WTC11 (cell line): ENCODE measurements at regions of chr6 and their contacts with region 1.

Region 1: DNA sequence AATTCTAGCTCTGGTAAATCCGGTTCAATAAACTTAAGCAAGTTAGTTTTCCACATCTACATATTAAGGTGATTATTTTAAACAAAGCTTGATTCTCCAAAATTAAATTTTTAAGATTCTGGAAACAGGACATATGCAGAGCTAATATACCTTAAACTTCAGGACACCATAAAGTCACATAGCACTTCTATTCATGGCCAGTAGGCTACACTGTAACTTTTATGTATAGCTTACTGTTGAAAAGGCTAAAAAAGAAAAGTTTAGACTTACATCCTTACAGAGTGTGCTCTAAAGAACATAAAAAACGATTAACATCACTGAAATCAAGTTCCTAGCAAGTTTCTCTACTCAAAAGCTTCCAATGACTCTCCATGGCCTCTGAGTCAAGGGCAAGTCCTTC is 224.7 kb downstream of the PTPRK start:
- DNase-seq: no peak
- ATAC-seq: peak; percentile 65
- H3K4me3 Mint-ChIP-seq: no peak overlapping the region
- H3K27ac Mint-ChIP-seq: no peak overlapping the region
- H3K4me1 Mint-ChIP-seq: peaks cover 5% of the 10 kb centered on the region; the same call in 1 of the 2 replicates
- H3K27me3 Mint-ChIP-seq: no peaks in the 10 kb centered on the region
- CTCF ChIP-seq: no peak

Region 2: DNA sequence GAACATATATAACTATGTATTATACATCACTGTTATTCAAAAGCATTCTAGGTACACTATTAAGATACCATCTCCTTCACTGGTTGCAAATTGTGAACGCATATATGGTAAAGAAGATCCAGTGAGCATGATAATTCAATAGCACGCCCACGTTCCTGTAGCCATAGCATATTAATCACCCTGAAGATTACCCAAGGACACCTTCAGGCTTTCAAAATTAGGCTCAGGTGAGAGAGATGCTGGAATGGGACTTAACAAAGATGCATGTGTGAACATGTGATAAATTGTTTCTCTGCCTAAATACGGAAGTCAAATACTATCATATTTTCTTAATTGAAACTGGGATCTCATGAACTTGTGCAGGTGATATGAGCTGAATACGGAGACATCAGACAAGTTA is 78.8 kb before region 1 on chr6:
- CTCF ChIA-PET with region 1: no interaction called
- POLR2A ChIA-PET with region 1: no interaction called
- DNase-seq: no peak
- ATAC-seq: no peak
- H3K4me3 Mint-ChIP-seq: no peak overlapping the region
- H3K27ac Mint-ChIP-seq: no peak overlapping the region
- H3K4me1 Mint-ChIP-seq: peaks cover 4% of the 10 kb centered on the region; the same call in 1 of the 2 replicates
- H3K27me3 Mint-ChIP-seq: no peaks in the 10 kb centered on the region
- CTCF ChIP-seq: no peak

Region 3: GRCh38 chr6:128252341-128253176 is 43.1 kb before region 1 on chr6:
- CTCF ChIA-PET with region 1: no interaction called
- POLR2A ChIA-PET with region 1: no interaction called
- DNase-seq: no peak
- ATAC-seq: peak; percentile 62
- H3K4me3 Mint-ChIP-seq: no peak overlapping the region
- H3K27ac Mint-ChIP-seq: peak overlapping the region; percentile 48; the same call in 1 of the 2 replicates
- H3K4me1 Mint-ChIP-seq: peaks cover 11% of the 10 kb centered on the region
- H3K27me3 Mint-ChIP-seq: no peaks in the 10 kb centered on the region
- CTCF ChIP-seq: no peak

Region 4: GRCh38 chr6:128316258-128316929 is 20.7 kb after region 1 on chr6:
- CTCF ChIA-PET with region 1: no interaction called
- POLR2A ChIA-PET with region 1: no interaction called
- DNase-seq: no peak
- ATAC-seq: peak; percentile 60
- H3K4me3 Mint-ChIP-seq: no peak overlapping the region
- H3K27ac Mint-ChIP-seq: peak overlapping the region; percentile 73
- H3K4me1 Mint-ChIP-seq: peaks cover 73% of the 10 kb centered on the region
- H3K27me3 Mint-ChIP-seq: no peaks in the 10 kb centered on the region
- CTCF ChIP-seq: no peak

Region 5: DNA sequence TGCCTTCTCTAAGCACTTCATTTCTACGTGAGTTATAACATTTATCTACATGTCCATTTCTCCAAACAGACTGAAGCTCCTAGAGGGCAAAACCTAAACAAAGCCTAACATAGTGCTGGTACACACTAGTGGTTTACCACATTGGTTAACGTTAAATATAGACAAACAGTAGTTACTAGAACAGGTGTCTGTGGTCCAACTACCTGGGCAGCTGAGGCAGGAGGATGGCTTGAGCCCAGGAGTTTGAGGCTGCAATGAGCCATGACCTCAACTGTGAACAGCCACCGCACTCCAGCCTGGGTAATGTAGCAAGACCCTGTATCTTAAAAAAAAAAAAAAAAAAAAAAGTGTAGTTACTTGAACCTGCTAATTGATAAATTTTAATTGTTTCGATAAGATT is 198.2 kb after region 1 on chr6:
- CTCF ChIA-PET with region 1: no interaction called
- POLR2A ChIA-PET with region 1: interaction called, 10 read pairs
- DNase-seq: no peak
- ATAC-seq: no peak
- H3K4me3 Mint-ChIP-seq: no peak overlapping the region
- H3K27ac Mint-ChIP-seq: no peak overlapping the region
- H3K4me1 Mint-ChIP-seq: peaks cover 61% of the 10 kb centered on the region
- H3K27me3 Mint-ChIP-seq: no peaks in the 10 kb centered on the region
- CTCF ChIP-seq: no peak